PC-3 (cell line): ENCODE measurements at regions of chr5 and their contacts with region 1.

Region 1: GRCh38 chr5:120803282-120803681 is 339.2 kb downstream of the PRR16 start:
- DNase-seq: peak; percentile 51
- ATAC-seq: peak; percentile 58; the same call in 1 of the 2 replicates
- H3K4me3 ChIP-seq: no peak overlapping the region
- H3K27ac ChIP-seq: no peak overlapping the region
- H3K4me1 ChIP-seq: no peaks in the 10 kb centered on the region
- H3K27me3 ChIP-seq: no peaks in the 10 kb centered on the region
- CTCF ChIP-seq: peak; percentile 54

Region 2: GRCh38 chr5:119943148-119943547 is 860.1 kb before region 1 on chr5:
- CTCF ChIA-PET with region 1: no interaction called
- POLR2A ChIA-PET with region 1: no interaction called
- intact Hi-C with region 1: loop called (anchors 5 kb)
- DNase-seq: peak; percentile 26
- ATAC-seq: peak; percentile 63
- H3K4me3 ChIP-seq: no peak overlapping the region
- H3K27ac ChIP-seq: no peak overlapping the region
- H3K4me1 ChIP-seq: no peaks in the 10 kb centered on the region
- H3K27me3 ChIP-seq: no peaks in the 10 kb centered on the region
- CTCF ChIP-seq: peak; percentile 51; the same call in 1 of the 2 replicates

Region 3: DNA sequence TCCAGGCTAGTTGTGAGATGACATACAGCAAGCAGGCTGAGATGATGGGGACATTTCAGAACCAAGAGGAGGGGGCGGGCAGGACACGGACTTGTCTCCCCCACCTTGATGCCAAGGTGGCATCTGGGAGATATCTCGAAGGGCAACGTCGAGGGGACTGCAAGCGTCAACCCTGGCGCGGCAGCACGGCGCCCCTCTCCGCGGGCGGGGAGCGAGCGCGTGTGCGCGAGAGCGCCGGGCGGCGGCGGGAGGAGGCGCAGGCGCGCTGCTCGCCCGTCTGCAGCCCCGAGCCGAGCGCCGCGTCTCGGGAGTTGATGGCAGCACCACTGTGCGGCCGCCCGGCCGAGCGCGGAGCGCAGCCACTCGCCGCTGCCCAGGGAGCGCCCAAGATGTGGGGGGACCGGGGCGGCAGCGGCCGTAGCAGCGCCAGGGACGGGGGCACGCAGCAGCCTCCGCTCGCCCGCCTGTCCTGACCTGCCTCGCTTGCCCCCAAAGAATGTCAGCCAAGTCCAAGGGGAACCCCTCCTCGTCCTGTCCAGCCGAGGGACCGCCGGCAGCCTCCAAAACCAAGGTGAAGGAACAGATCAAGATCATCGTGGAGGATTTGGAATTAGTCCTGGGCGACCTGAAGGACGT is 339.2 kb before region 1 on chr5 and contains the start of gene PRR16:
- CTCF ChIA-PET with region 1: no interaction called
- POLR2A ChIA-PET with region 1: no interaction called
- intact Hi-C with region 1: loop called (anchors 2 kb)
- DNase-seq: peak; percentile 56
- ATAC-seq: peak; percentile 81
- H3K4me3 ChIP-seq: peak within 1 kb of the TSS; percentile 71
- H3K27ac ChIP-seq: no peak within 1 kb of the TSS
- H3K4me1 ChIP-seq: 0 out of 2 replicates have a peak, but pooled peaks cover 4% of the 10 kb centered on the region
- H3K27me3 ChIP-seq: no peaks in the 10 kb centered on the region
- CTCF ChIP-seq: no peak; the same call in 1 of the 2 replicates
- total RNA-seq, gene PRR16: 2.4 and 3.6 TPM in 2 replicates

Region 4: GRCh38 chr5:120516805-120517204 is 286.5 kb before region 1 on chr5:
- CTCF ChIA-PET with region 1: no interaction called
- POLR2A ChIA-PET with region 1: no interaction called
- intact Hi-C with region 1: no loop called
- DNase-seq: no peak
- ATAC-seq: no peak
- H3K4me3 ChIP-seq: no peak overlapping the region
- H3K27ac ChIP-seq: no peak overlapping the region
- H3K4me1 ChIP-seq: no peaks in the 10 kb centered on the region
- H3K27me3 ChIP-seq: no peaks in the 10 kb centered on the region
- CTCF ChIP-seq: no peak

Region 5: GRCh38 chr5:120655828-120656435 is 147.3 kb before region 1 on chr5:
- CTCF ChIA-PET with region 1: no interaction called
- POLR2A ChIA-PET with region 1: no interaction called
- intact Hi-C with region 1: loop called (anchors 1 kb)
- DNase-seq: peak; percentile 64
- ATAC-seq: peak; percentile 66
- H3K4me3 ChIP-seq: no peak overlapping the region
- H3K27ac ChIP-seq: no peak overlapping the region
- H3K4me1 ChIP-seq: no peaks in the 10 kb centered on the region
- H3K27me3 ChIP-seq: no peaks in the 10 kb centered on the region
- CTCF ChIP-seq: peak; percentile 78

Region 6: DNA sequence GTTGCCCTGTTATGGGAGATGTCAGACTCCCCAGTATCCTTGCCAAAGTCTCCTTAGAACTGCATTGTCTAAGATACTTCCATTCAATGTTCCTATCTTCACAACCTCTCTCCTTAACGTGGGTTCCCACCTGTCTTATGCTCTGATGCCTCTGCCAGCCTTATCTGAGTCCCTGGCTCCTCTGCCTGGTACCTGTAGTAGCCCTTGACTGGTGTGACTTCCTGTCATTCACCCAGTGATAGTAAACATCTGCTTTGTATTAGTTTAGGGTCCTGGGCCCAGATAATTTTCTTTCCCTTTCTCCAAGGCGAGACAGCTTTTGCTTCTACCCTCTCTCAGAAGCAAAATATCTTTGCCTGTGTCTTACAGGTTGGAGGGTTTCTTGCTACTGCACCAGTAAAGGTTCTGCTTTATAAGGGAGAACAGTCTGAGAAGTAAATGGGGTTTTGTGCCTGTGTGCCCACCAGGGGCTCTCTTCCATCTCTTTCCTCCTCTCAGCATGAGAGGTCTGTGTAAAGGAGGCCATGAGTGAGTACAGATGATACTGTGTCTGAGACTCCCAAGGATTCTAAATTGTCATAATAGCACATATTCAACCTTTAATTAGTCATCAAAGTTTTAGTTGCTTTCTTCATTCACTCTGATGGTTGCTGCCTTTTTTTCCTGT is 118.4 kb before region 1 on chr5:
- CTCF ChIA-PET with region 1: no interaction called
- POLR2A ChIA-PET with region 1: no interaction called
- intact Hi-C with region 1: loop called (anchors 10 kb)
- DNase-seq: no peak
- ATAC-seq: no peak
- H3K4me3 ChIP-seq: no peak overlapping the region
- H3K27ac ChIP-seq: no peak overlapping the region
- H3K4me1 ChIP-seq: peaks cover 33% of the 10 kb centered on the region
- H3K27me3 ChIP-seq: no peaks in the 10 kb centered on the region
- CTCF ChIP-seq: peak; percentile 25; the same call in 1 of the 2 replicates

Region 7: GRCh38 chr5:120749737-120750136 is 53.5 kb before region 1 on chr5:
- CTCF ChIA-PET with region 1: no interaction called
- POLR2A ChIA-PET with region 1: no interaction called
- intact Hi-C with region 1: loop called (anchors 5 kb)
- DNase-seq: peak; percentile 58
- ATAC-seq: peak; percentile 95
- H3K4me3 ChIP-seq: no peak overlapping the region
- H3K27ac ChIP-seq: no peak overlapping the region
- H3K4me1 ChIP-seq: peaks cover 5% of the 10 kb centered on the region; the same call in 1 of the 2 replicates
- H3K27me3 ChIP-seq: no peaks in the 10 kb centered on the region
- CTCF ChIP-seq: no peak

Region 8: GRCh38 chr5:120988941-120989340 is 185.7 kb after region 1 on chr5:
- CTCF ChIA-PET with region 1: no interaction called
- POLR2A ChIA-PET with region 1: no interaction called
- intact Hi-C with region 1: no loop called
- DNase-seq: no peak
- ATAC-seq: no peak
- H3K4me3 ChIP-seq: no peak overlapping the region
- H3K27ac ChIP-seq: no peak overlapping the region
- H3K4me1 ChIP-seq: no peaks in the 10 kb centered on the region
- H3K27me3 ChIP-seq: no peaks in the 10 kb centered on the region
- CTCF ChIP-seq: no peak

Region 9: DNA sequence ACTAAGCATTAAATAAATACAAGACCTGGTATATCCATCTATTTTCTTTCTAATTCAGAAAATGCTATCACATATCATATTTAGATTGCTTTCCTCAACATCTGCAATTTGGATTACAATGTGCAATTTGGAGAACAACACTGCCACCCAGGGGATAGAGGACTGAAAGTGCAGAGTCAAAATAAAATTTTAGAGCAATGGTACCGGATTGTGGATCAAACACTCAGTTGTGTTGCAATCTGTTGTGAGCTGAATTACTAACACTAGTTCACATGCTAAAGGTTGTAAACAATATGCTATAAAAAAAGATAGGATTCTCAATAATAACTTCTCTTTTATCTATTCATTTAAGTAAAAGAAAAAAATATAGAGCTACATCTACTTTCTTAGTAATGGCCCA is 1146.6 kb after region 1 on chr5:
- CTCF ChIA-PET with region 1: no interaction called
- POLR2A ChIA-PET with region 1: no interaction called
- intact Hi-C with region 1: loop called (anchors 5 kb)
- DNase-seq: peak; percentile 62
- ATAC-seq: no peak
- H3K4me3 ChIP-seq: no peak overlapping the region
- H3K27ac ChIP-seq: no peak overlapping the region
- H3K4me1 ChIP-seq: no peaks in the 10 kb centered on the region
- H3K27me3 ChIP-seq: no peaks in the 10 kb centered on the region
- CTCF ChIP-seq: peak; percentile 73